K562 (cell line): ENCODE measurements at regions of chr1 and their contacts with region 1.

Region 1: DNA sequence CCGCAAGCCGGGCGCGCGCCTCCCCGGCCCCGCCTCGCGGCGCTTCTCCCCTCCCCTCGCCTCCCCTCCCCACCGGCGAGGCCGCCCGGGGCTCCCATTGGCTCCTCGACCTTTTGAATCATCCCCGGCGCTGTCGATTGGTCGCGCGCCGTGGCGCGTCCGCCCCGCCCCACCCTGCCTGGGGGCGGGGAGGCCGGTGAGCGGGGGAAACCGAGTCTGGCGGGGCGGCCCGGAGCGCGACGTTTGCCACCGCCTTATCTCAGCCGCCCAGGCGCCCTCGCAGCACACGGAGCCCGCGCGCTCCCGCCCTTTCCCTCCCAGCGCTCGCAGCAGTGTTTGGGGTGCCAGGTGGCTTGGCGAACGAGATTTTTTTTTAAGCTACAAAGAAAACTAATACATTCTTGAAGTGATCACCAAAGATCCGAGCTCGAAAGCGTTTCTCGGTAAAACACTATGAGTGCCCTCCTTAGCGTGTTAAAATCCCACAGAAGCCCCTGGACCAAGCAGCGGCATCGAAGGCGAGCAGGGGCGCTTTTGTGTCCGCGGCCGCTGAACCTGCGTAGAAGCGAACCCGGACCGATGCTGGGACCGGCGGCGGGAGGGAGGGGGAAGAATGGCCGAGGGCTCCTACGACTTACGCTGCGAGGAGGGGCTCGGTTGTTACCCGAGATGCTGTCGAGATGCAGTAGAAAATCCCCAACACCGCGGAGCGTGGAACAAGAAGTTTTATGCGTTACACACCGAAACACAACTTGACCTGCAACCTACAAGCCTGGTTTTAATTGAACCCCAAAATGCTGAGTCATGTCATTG is 436 bp upstream of the LBR start:
- DNase-seq: peak; percentile 99
- ATAC-seq: peak; percentile 93
- H3K4me3 ChIP-seq: peak overlapping the region; percentile 94
- H3K27ac ChIP-seq: peak overlapping the region; percentile 87
- H3K4me1 ChIP-seq: peaks cover 27 to 33% of the 10 kb centered on the region in 2 experiments
- H3K27me3 ChIP-seq: no peaks in the 10 kb centered on the region
- CTCF ChIP-seq: no peak
- EP300 ChIP-seq: peak; percentile 85
- POLR2A ChIP-seq: peak; percentile 81
- RAD21 ChIP-seq: no peak; a peak in 1 of 4 replicates

Region 2: GRCh38 chr1:225406976-225407725 is 21.1 kb before region 1 on chr1:
- CTCF ChIA-PET with region 1: no interaction called
- POLR2A ChIA-PET with region 1: interaction called, 17 read pairs
- in situ Hi-C with region 1: no loop called
- intact Hi-C with region 1: no loop called
- DNase-seq: no peak
- ATAC-seq: peak; percentile 45
- H3K4me3 ChIP-seq: no peak overlapping the region
- H3K27ac ChIP-seq: no peak overlapping the region
- H3K4me1 ChIP-seq: no peaks in the 10 kb centered on the region
- H3K27me3 ChIP-seq: no peaks in the 10 kb centered on the region
- CTCF ChIP-seq: no peak
- EP300 ChIP-seq: no peak
- POLR2A ChIP-seq: no peak; the same call in 1 of the 2 replicates
- RAD21 ChIP-seq: no peak

Region 3: DNA sequence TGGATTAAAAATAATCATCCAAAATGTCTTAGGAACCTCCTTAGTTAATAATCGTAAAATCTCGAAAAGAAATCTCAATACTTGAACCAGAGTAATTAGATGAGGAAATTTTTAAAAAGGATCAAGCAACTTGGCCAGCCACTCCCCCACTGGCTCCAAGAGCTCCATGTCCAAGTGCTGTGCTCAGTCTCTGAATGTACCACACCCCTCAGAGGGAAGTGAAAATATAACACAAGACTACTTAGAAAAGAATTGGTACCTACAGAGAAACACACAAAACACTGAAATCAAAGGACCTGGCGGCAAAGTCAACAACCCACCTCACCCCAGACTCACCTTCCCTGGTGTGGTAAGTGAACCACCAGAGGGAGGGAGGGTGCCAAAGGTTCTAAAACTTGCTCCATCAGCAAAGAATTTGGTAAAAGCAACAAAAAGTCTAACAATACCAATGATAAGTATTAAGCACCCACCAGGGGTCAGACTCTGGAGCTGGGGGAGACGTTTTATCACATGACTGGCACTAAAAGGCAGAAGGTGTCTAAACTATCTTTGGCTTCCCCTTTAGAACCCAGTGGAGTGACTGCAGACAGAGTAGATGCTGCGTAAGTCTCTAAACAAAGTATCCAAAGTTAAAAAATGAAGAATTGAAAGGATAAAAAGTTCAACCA is 14.4 kb before region 1 on chr1:
- CTCF ChIA-PET with region 1: no interaction called
- POLR2A ChIA-PET with region 1: interaction called, 17 read pairs
- in situ Hi-C with region 1: no loop called
- intact Hi-C with region 1: no loop called
- DNase-seq: no peak
- ATAC-seq: peak; percentile 18; the same call in 1 of the 3 replicates
- H3K4me3 ChIP-seq: no peak overlapping the region
- H3K27ac ChIP-seq: no peak overlapping the region
- H3K4me1 ChIP-seq: no peaks in the 10 kb centered on the region
- H3K27me3 ChIP-seq: no peaks in the 10 kb centered on the region
- CTCF ChIP-seq: peak in 1 of 3 experiments; percentile 10; a peak in 1 of 6 replicates
- EP300 ChIP-seq: no peak
- POLR2A ChIP-seq: no peak
- RAD21 ChIP-seq: no peak

Region 4: GRCh38 chr1:225440380-225441221 is 12.3 kb after region 1 on chr1:
- CTCF ChIA-PET with region 1: no interaction called
- POLR2A ChIA-PET with region 1: interaction called, 16 read pairs
- in situ Hi-C with region 1: no loop called
- intact Hi-C with region 1: loop called (anchors 2 kb)
- DNase-seq: no peak
- ATAC-seq: no peak
- H3K4me3 ChIP-seq: no peak overlapping the region
- H3K27ac ChIP-seq: no peak overlapping the region
- H3K4me1 ChIP-seq: peaks cover 20 to 42% of the 10 kb centered on the region in 2 experiments
- H3K27me3 ChIP-seq: no peaks in the 10 kb centered on the region
- CTCF ChIP-seq: no peak
- EP300 ChIP-seq: no peak
- POLR2A ChIP-seq: no peak
- RAD21 ChIP-seq: no peak

Region 5: DNA sequence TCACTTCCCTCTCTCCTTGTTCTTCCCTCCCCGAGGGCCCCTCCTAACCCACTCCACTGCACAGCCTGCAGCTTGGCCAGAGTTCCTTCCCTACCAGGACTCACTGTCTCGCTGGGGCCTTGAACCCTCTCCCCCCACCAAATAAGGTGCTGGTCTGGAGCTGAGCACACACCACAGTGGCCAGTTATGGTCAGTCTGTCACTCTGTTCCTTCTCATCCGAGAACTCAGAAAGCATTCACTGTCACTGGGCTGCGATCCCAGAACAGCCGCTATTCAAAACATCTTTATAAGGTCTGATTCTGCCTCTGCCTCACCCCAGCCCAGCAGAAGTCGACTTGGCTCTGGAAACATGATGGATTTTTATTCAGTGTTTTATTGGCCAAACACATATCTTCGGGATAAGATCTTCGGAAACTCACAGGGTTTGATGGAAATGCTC is 19.4 kb after region 1 on chr1:
- CTCF ChIA-PET with region 1: no interaction called
- POLR2A ChIA-PET with region 1: interaction called, 16 read pairs
- in situ Hi-C with region 1: no loop called
- intact Hi-C with region 1: loop called (anchors 2 kb)
- DNase-seq: no peak
- ATAC-seq: no peak
- H3K4me3 ChIP-seq: no peak overlapping the region
- H3K27ac ChIP-seq: no peak overlapping the region
- H3K4me1 ChIP-seq: peaks cover 26 to 28% of the 10 kb centered on the region in 2 experiments
- H3K27me3 ChIP-seq: no peaks in the 10 kb centered on the region
- CTCF ChIP-seq: no peak
- EP300 ChIP-seq: no peak
- POLR2A ChIP-seq: no peak
- RAD21 ChIP-seq: no peak

Region 6: GRCh38 chr1:225597926-225598575 is 169.8 kb after region 1 on chr1:
- CTCF ChIA-PET with region 1: no interaction called
- POLR2A ChIA-PET with region 1: no interaction called
- in situ Hi-C with region 1: no loop called
- intact Hi-C with region 1: no loop called
- DNase-seq: no peak
- ATAC-seq: no peak
- H3K4me3 ChIP-seq: no peak overlapping the region
- H3K27ac ChIP-seq: no peak overlapping the region
- H3K4me1 ChIP-seq: no peaks in the 10 kb centered on the region
- H3K27me3 ChIP-seq: peaks cover 0 to 3% of the 10 kb centered on the region in 2 experiments; a peak in 2 of 5 replicates
- CTCF ChIP-seq: no peak
- EP300 ChIP-seq: no peak
- POLR2A ChIP-seq: no peak
- RAD21 ChIP-seq: no peak

Region 7: GRCh38 chr1:225652729-225653462 is 224.6 kb after region 1 on chr1 and contains the start of gene ENAH:
- CTCF ChIA-PET with region 1: no interaction called
- POLR2A ChIA-PET with region 1: no interaction called
- in situ Hi-C with region 1: no loop called
- intact Hi-C with region 1: no loop called
- DNase-seq: peak; percentile 67 to 93 (median 82)
- ATAC-seq: peak; percentile 88
- H3K4me3 ChIP-seq: peak within 1 kb of the TSS; percentile 26
- H3K27ac ChIP-seq: no peak within 1 kb of the TSS
- H3K4me1 ChIP-seq: peaks cover 0 to 16% of the 10 kb centered on the region in 2 experiments; a peak in 2 of 5 replicates
- H3K27me3 ChIP-seq: peaks cover 33 to 35% of the 10 kb centered on the region in 2 experiments
- CTCF ChIP-seq: no peak
- EP300 ChIP-seq: no peak
- POLR2A ChIP-seq: no peak
- RAD21 ChIP-seq: no peak
- polyA plus RNA-seq, gene ENAH: 0.03 to 0.13 TPM

Region 8: DNA sequence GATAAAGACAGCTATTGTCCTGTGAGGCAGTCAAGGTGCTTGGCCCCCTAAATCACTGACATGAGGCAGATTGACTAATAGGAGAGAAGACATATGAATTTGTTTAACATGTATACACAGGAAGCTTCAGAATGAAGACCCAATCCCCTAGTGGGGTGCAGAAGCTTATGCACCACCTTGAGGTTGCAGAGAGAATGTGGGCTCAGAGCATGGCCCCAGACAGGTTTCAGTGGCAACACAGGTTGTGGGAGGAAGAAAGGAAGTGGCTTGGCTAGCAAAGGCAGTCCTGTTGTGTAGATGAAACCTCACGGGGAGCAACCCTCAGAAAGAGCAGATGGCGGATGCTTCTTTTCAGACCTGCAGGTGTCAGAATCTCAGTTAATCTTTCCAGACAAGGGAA is 1016.6 kb after region 1 on chr1:
- CTCF ChIA-PET with region 1: no interaction called
- POLR2A ChIA-PET with region 1: no interaction called
- in situ Hi-C with region 1: no loop called
- intact Hi-C with region 1: no loop called
- DNase-seq: no peak
- ATAC-seq: peak; percentile 68
- H3K4me3 ChIP-seq: no peak overlapping the region
- H3K27ac ChIP-seq: no peak overlapping the region
- H3K4me1 ChIP-seq: no peaks in the 10 kb centered on the region; a peak in 1 of 5 replicates
- H3K27me3 ChIP-seq: peaks cover 32 to 39% of the 10 kb centered on the region in 2 experiments
- CTCF ChIP-seq: peak in 1 of 3 experiments; percentile 13; a peak in 1 of 6 replicates
- EP300 ChIP-seq: no peak
- POLR2A ChIP-seq: no peak
- RAD21 ChIP-seq: no peak